OCI-LY7 (cell line): ENCODE measurements at regions of chr5 and their contacts with region 1.

Region 1: GRCh38 chr5:125006011-125006685 is 259.7 kb upstream of the ZNF608 start:
- DNase-seq: peak; percentile 97
- H3K4me3 ChIP-seq: peak overlapping the region; percentile 55
- H3K27ac ChIP-seq: peak overlapping the region; percentile 100
- H3K4me1 ChIP-seq: peaks cover 91% of the 10 kb centered on the region
- CTCF ChIP-seq: no peak

Region 2: GRCh38 chr5:124056991-124057723 is 949.0 kb before region 1 on chr5:
- CTCF ChIA-PET with region 1: no interaction called
- POLR2A ChIA-PET with region 1: no interaction called
- intact Hi-C with region 1: loop called (anchors 10 kb)
- DNase-seq: peak; percentile 80
- H3K4me3 ChIP-seq: peak overlapping the region; percentile 58
- H3K27ac ChIP-seq: peak overlapping the region; percentile 31
- H3K4me1 ChIP-seq: peaks cover 35% of the 10 kb centered on the region
- CTCF ChIP-seq: no peak

Region 3: GRCh38 chr5:124655922-124656511 is 350.1 kb before region 1 on chr5:
- CTCF ChIA-PET with region 1: no interaction called
- POLR2A ChIA-PET with region 1: interaction called, 3 read pairs
- intact Hi-C with region 1: loop called (anchors 2 kb)
- DNase-seq: peak; percentile 75
- H3K4me3 ChIP-seq: peak overlapping the region; percentile 59
- H3K27ac ChIP-seq: peak overlapping the region; percentile 73
- H3K4me1 ChIP-seq: peaks cover 99% of the 10 kb centered on the region
- CTCF ChIP-seq: no peak

Region 4: GRCh38 chr5:124748687-124749594 is 257.2 kb before region 1 on chr5:
- CTCF ChIA-PET with region 1: interaction called, 3 read pairs
- POLR2A ChIA-PET with region 1: interaction called, 54 read pairs
- intact Hi-C with region 1: loop called (anchors 1 kb)
- DNase-seq: peak; percentile 96
- H3K4me3 ChIP-seq: peak overlapping the region; percentile 85
- H3K27ac ChIP-seq: peak overlapping the region; percentile 97
- H3K4me1 ChIP-seq: peaks cover 21% of the 10 kb centered on the region
- CTCF ChIP-seq: peak; percentile 33; the same call in 1 of the 2 replicates

Region 5: DNA sequence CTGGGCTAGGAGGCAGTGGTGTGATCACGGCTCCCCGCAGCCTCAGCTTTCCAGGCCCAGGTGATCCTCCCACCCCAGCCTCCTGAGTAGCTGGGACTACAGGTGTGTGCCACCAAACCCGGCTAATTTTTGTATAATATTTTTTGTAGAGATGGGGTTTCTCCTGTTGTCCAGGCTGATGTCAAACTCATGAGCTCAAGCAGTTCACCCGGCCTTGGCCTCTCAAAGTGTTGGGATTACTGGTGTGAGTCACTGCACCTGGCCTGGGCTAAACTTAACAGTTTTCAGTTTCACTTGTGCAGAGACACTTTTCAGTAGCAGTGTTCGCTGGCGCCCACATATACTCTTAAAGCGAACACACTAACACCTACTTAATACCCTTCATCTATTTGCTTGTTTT is 54.1 kb before region 1 on chr5:
- CTCF ChIA-PET with region 1: no interaction called
- POLR2A ChIA-PET with region 1: interaction called, 3 read pairs
- intact Hi-C with region 1: loop called (anchors 5 kb)
- DNase-seq: peak; percentile 61
- H3K4me3 ChIP-seq: peak overlapping the region; percentile 38
- H3K27ac ChIP-seq: peak overlapping the region; percentile 56
- H3K4me1 ChIP-seq: peaks cover 22% of the 10 kb centered on the region
- CTCF ChIP-seq: no peak

Region 6: GRCh38 chr5:125037020-125037419 is 30.9 kb after region 1 on chr5:
- CTCF ChIA-PET with region 1: no interaction called
- POLR2A ChIA-PET with region 1: interaction called, 11 read pairs
- intact Hi-C with region 1: no loop called
- DNase-seq: peak; percentile 60
- H3K4me3 ChIP-seq: peak overlapping the region; percentile 9
- H3K27ac ChIP-seq: peak overlapping the region; percentile 17
- H3K4me1 ChIP-seq: peaks cover 33% of the 10 kb centered on the region
- CTCF ChIP-seq: no peak

Region 7: DNA sequence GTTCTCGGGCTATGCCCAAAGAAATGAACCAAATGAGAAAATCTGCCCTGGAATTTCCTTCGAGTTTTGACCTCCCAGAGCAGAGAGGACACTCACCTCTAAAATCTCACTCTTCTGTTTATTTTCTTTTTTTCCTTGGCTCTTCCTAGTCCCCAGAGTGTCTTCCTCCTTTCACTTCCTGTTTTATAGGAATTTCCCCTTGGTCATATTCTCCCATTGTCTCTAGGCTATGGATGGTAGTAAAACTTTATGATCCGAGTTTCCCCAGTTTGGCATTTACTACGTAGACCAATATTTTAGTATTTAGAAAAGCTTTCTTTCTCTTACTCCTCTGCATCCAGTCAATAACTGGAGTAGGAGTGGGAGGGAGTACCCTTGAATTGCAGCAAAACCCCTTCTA is 94.8 kb after region 1 on chr5:
- CTCF ChIA-PET with region 1: no interaction called
- POLR2A ChIA-PET with region 1: no interaction called
- intact Hi-C with region 1: no loop called
- DNase-seq: no peak
- H3K4me3 ChIP-seq: no peak overlapping the region
- H3K27ac ChIP-seq: no peak overlapping the region
- H3K4me1 ChIP-seq: no peaks in the 10 kb centered on the region
- CTCF ChIP-seq: no peak